A673 (cell line): ENCODE measurements at regions of chr1 and their contacts with region 1.

Region 1: GRCh38 chr1:175154629-175155472 is 37.7 kb downstream of the KIAA0040 start:
- DNase-seq: peak; percentile 70
- H3K4me3 ChIP-seq: no peak overlapping the region
- H3K27ac ChIP-seq: no peak overlapping the region
- H3K4me1 ChIP-seq: no peaks in the 10 kb centered on the region
- H3K27me3 ChIP-seq: no peaks in the 10 kb centered on the region
- CTCF ChIP-seq: peak; percentile 92

Region 2: GRCh38 chr1:175023043-175023921 is 131.6 kb before region 1 on chr1 and contains the start of gene MRPS14:
- CTCF ChIA-PET with region 1: no interaction called
- POLR2A ChIA-PET with region 1: interaction called, 15 read pairs
- intact Hi-C with region 1: no loop called
- DNase-seq: peak; percentile 97
- H3K4me3 ChIP-seq: peak within 1 kb of the TSS; percentile 96
- H3K27ac ChIP-seq: peak within 1 kb of the TSS; percentile 85
- H3K4me1 ChIP-seq: no peaks in the 10 kb centered on the region
- H3K27me3 ChIP-seq: no peaks in the 10 kb centered on the region
- CTCF ChIP-seq: no peak
- total RNA-seq, gene MRPS14: 39.6 and 40.1 TPM in 2 replicates

Region 3: DNA sequence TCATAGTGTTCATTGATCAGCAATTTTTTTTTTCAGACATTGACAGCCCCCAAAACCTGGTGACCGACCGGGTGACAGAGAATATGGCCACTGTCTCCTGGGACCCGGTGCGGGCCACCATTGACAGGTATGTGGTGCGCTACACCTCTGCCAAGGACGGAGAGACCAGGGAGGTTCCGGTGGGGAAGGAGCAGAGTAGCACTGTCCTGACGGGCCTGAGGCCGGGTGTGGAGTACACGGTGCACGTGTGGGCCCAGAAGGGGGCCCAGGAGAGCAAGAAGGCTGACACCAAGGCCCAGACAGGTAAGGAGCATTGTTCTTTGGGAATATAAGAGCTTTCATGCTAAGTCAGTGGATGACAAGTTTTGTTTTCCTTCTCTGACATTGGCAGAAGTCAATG is 37.9 kb before region 1 on chr1:
- CTCF ChIA-PET with region 1: no interaction called
- POLR2A ChIA-PET with region 1: no interaction called
- intact Hi-C with region 1: no loop called
- DNase-seq: no peak
- H3K4me3 ChIP-seq: no peak overlapping the region
- H3K27ac ChIP-seq: no peak overlapping the region
- H3K4me1 ChIP-seq: no peaks in the 10 kb centered on the region
- H3K27me3 ChIP-seq: no peaks in the 10 kb centered on the region
- CTCF ChIP-seq: no peak

Region 4: DNA sequence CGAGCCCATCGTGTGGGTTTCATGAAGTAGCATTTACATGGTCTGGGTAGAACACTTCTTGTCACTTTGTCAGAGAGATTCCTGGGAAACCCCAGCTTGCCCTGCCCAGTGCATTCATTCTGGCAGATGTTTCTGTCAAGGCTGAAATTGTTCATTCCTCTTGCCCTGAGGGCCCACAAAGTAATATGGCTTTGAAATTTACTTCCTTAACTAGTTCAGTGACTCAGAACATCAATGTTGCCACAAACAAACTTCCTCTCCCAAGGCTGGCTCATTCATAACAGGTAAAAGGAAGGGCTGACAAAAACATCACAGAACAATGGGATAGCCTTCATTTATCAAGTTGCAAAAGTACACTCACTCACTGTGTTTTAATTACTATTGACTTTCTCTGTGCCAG is 42.7 kb after region 1 on chr1:
- CTCF ChIA-PET with region 1: no interaction called
- POLR2A ChIA-PET with region 1: no interaction called
- intact Hi-C with region 1: no loop called
- DNase-seq: no peak
- H3K4me3 ChIP-seq: no peak overlapping the region
- H3K27ac ChIP-seq: no peak overlapping the region
- H3K4me1 ChIP-seq: no peaks in the 10 kb centered on the region
- H3K27me3 ChIP-seq: peaks cover 53% of the 10 kb centered on the region
- CTCF ChIP-seq: no peak

Region 5: GRCh38 chr1:175307160-175307559 is 152.3 kb after region 1 on chr1:
- CTCF ChIA-PET with region 1: no interaction called
- POLR2A ChIA-PET with region 1: no interaction called
- intact Hi-C with region 1: no loop called
- DNase-seq: no peak
- H3K4me3 ChIP-seq: no peak overlapping the region
- H3K27ac ChIP-seq: no peak overlapping the region
- H3K4me1 ChIP-seq: no peaks in the 10 kb centered on the region
- H3K27me3 ChIP-seq: peaks cover 43% of the 10 kb centered on the region
- CTCF ChIP-seq: no peak

Region 6: DNA sequence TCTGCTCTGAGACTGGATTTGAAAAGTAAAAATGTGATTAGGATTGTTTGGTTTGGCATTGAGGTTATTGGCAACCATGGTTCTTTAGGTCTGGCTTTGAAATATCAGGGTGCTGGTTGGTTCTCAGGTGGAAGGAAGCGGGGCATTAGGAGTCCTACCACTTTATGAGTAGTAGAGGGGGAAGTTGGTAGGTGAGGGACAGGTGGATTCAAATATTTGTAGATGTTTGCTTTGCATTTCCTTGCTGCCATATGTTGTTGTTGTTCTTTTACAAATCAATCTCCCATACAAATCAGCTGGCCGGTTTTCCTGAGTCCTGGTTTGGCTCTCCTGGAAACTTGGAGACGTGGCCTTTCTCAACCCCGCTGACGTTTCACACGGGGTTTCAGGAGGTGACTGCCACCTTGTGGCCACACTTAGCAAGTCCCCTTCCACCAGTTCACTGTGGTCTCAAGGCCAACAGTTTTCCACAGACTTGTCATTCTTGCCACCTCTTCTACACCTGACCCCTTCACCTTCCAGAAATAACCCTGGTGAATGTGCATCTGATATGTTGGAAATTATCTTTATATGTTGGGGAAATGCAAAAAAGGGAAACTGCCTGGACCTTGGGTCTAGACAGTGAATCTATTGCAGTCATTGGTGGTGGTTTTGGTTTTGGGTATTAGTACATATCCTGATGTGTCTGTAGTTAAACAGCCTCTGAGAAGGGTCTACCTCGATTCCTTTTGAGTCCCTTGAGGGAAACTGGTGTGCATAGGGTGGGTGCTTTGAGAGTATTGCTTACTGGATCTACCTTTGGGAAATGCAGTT is 164.8 kb after region 1 on chr1:
- CTCF ChIA-PET with region 1: interaction called, 22 read pairs
- POLR2A ChIA-PET with region 1: no interaction called
- intact Hi-C with region 1: loop called (anchors 1 kb)
- DNase-seq: peak; percentile 64
- H3K4me3 ChIP-seq: no peak overlapping the region
- H3K27ac ChIP-seq: no peak overlapping the region
- H3K4me1 ChIP-seq: no peaks in the 10 kb centered on the region
- H3K27me3 ChIP-seq: no peaks in the 10 kb centered on the region
- CTCF ChIP-seq: peak; percentile 85

Region 7: GRCh38 chr1:175887981-175888433 is 733.2 kb after region 1 on chr1:
- CTCF ChIA-PET with region 1: no interaction called
- POLR2A ChIA-PET with region 1: no interaction called
- intact Hi-C with region 1: loop called (anchors 10 kb)
- DNase-seq: peak; percentile 70
- H3K4me3 ChIP-seq: no peak overlapping the region
- H3K27ac ChIP-seq: no peak overlapping the region
- H3K4me1 ChIP-seq: no peaks in the 10 kb centered on the region
- H3K27me3 ChIP-seq: no peaks in the 10 kb centered on the region
- CTCF ChIP-seq: peak; percentile 86

Region 8: DNA sequence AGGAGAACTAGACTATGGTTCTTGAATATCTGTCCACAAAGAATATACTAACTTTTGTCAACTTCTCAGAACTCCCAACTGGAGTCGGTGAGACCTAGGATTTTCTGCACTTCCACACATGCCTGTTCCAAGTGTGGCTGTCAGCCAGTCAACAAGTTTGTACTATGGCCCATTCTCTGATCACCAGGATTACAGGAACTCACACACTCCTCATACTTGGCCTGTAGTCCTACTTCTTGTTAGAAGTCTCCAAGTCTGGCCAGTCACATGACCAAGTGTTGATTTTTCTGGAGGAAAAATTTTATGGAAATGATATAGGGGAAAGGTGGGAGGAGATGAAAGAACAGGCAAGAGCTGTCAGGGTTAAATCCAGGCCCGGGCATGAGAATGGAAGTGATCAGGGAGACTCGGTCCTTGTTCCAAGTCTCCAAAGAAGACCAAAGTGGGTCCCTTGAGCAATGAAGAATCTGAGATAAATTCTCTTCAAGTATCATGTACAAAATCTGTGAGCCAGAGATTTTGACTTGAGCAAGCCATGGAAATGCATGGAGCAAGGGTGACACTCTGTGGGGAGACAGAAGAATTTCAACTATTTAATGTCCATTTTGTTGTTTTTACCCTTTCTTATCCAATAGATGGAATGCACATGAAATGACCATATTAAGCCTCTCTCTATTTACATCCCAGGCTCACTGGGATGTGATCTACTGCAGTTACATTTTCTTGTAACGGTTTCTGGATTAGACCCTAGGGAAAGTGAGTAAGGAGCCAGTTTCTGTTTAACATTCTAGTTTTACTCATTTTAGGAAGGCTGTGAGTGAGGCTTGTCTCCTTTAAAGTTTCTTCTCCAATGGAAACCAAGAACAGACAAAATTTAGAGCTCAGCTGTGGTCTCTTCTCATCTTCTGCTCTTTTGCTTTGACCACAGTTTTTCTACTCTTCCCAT is 1688.8 kb after region 1 on chr1:
- CTCF ChIA-PET with region 1: no interaction called
- POLR2A ChIA-PET with region 1: no interaction called
- intact Hi-C with region 1: loop called (anchors 2 kb)
- DNase-seq: peak; percentile 65
- H3K4me3 ChIP-seq: no peak overlapping the region
- H3K27ac ChIP-seq: no peak overlapping the region
- H3K4me1 ChIP-seq: peaks cover 3% of the 10 kb centered on the region
- H3K27me3 ChIP-seq: no peaks in the 10 kb centered on the region
- CTCF ChIP-seq: peak; percentile 59